Ovary (tissue), 10 donors: ENCODE measurements at regions of chr19 and their contacts with region 1.

Region 1: GRCh38 chr19:58558623-58559274 is 338 bp upstream of the UBE2M start:
- DNase-seq: peak; percentile 99 to 100 (median 100)
- H3K4me3 ChIP-seq: peak overlapping the region; percentile 70
- H3K27ac ChIP-seq: peak overlapping the region; percentile 88 to 99
- H3K4me1 ChIP-seq: peaks cover 33% of the 10 kb centered on the region
- H3K27me3 ChIP-seq: no peaks in the 10 kb centered on the region
- CTCF ChIP-seq: no peak
- EP300 ChIP-seq: no peak
- POLR2A ChIP-seq: no peak

Region 2: GRCh38 chr19:58519355-58520256 is 39.1 kb before region 1 on chr19 and contains the start of gene ZBTB45:
- intact Hi-C with region 1: loop called in 1 of 4 experiments (anchors 1 kb)
- DNase-seq: peak; percentile 90 to 95 (median 92)
- H3K4me3 ChIP-seq: peak within 1 kb of the TSS; percentile 76
- H3K27ac ChIP-seq: peak within 1 kb of the TSS; percentile 65 to 86
- H3K4me1 ChIP-seq: peaks cover 7% of the 10 kb centered on the region
- H3K27me3 ChIP-seq: no peaks in the 10 kb centered on the region
- CTCF ChIP-seq: peak; percentile 24 to 94 (median 89)
- EP300 ChIP-seq: no peak
- POLR2A ChIP-seq: peak; percentile 75
- total RNA-seq, gene ZBTB45: 8.1 to 23.3 (median 17.3) TPM